ENCODE measurements at regions of chr18 and their contacts with region 1.

Region 1: GRCh38 chr18:57881818-57882413 is 78.8 kb upstream of the ATP8B1 start:
- DNase-seq: peak; percentile 76
- ATAC-seq: peak; percentile 94
- H3K4me3 ChIP-seq: no peak overlapping the region
- H3K4me3 Mint-ChIP-seq: no peak overlapping the region
- H3K27ac ChIP-seq: no peak overlapping the region
- H3K27ac Mint-ChIP-seq: no peak overlapping the region
- H3K4me1 ChIP-seq: peaks cover 0 to 3% of the 10 kb centered on the region in 2 donors
- H3K4me1 Mint-ChIP-seq: peaks cover 4% of the 10 kb centered on the region
- H3K27me3 ChIP-seq: no peaks in the 10 kb centered on the region
- H3K27me3 Mint-ChIP-seq: no peaks in the 10 kb centered on the region
- CTCF ChIP-seq: peak; percentile 97

Region 2: DNA sequence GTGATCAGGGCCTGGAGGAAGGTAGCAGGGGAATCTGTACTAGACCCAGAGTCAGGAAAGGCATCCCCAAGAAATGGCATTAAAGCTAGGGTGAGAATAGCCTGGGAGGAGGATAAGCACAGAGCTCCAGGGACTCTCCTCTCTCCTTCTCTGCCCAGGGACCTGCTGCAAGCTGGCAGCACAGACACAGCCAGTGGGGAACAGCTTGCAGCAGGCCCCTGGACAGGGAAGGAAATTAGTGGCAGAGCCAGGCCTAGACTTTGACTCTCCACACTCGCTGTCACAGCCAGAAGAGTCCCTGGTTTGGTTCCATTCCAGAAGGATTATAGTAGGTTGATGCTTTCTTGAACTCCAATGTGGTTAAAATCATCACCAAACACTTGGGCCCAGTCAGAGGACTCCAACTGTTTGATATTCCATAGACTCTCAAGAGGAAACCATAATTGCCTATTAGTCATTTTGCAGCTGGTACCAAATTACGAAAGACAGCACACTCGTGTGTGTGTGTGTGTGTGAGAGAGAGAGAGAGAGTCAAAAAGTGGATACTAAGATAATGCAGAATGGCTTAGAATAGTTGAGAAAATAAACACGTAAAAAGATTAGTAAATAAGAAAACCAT is 16.7 kb after region 1 on chr18:
- CTCF ChIA-PET with region 1: interaction called, 10 read pairs
- POLR2A ChIA-PET with region 1: no interaction called
- intact Hi-C with region 1: no loop called
- DNase-seq: no peak
- ATAC-seq: no peak
- H3K4me3 ChIP-seq: no peak overlapping the region
- H3K4me3 Mint-ChIP-seq: no peak overlapping the region
- H3K27ac ChIP-seq: no peak overlapping the region
- H3K27ac Mint-ChIP-seq: no peak overlapping the region
- H3K4me1 ChIP-seq: no peaks in the 10 kb centered on the region
- H3K4me1 Mint-ChIP-seq: no peaks in the 10 kb centered on the region
- H3K27me3 ChIP-seq: peaks cover 0 to 3% (median 0%) of the 10 kb centered on the region in 4 experiments
- H3K27me3 Mint-ChIP-seq: peaks cover 2% of the 10 kb centered on the region
- CTCF ChIP-seq: no peak

Region 3: GRCh38 chr18:57921708-57922107 is 39.8 kb after region 1 on chr18:
- CTCF ChIA-PET with region 1: no interaction called
- POLR2A ChIA-PET with region 1: no interaction called
- intact Hi-C with region 1: no loop called
- DNase-seq: no peak
- ATAC-seq: no peak
- H3K4me3 ChIP-seq: no peak overlapping the region
- H3K4me3 Mint-ChIP-seq: no peak overlapping the region
- H3K27ac ChIP-seq: no peak overlapping the region
- H3K27ac Mint-ChIP-seq: no peak overlapping the region
- H3K4me1 ChIP-seq: peaks cover 0 to under 1% of the 10 kb centered on the region in 2 donors
- H3K4me1 Mint-ChIP-seq: peaks cover under 1% of the 10 kb centered on the region
- H3K27me3 ChIP-seq: no peaks in the 10 kb centered on the region
- H3K27me3 Mint-ChIP-seq: no peaks in the 10 kb centered on the region
- CTCF ChIP-seq: no peak

Region 4: DNA sequence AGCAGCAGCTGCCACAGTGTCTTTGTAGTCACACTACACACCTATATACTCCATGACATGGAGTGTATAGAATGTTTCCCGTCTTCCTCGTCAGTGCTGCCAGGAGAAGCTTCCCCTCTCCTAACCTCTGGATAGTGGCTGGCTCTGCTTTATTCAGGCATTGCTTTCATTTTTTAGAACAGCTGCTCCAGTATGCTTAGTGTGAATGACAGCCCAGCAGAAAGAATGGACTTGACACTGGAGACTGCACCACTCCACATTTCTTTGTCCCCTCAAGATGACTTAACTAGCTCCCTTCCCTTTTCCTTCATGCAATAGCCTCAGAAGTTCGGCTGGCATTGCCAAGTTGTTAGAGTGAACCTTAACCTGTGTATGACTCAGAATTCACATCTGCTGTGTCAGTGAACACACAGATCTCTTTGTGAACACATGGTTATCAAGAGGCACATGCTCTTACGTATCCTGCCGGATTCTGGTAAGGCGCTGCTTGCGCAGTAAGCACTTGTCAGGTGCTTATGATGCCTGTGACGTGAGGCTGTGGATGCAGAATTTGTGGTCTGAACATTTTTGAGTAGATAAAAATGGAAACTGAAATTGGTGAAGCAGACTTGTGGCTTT is 236.0 kb after region 1 on chr18:
- CTCF ChIA-PET with region 1: interaction called, 111 read pairs
- POLR2A ChIA-PET with region 1: no interaction called
- intact Hi-C with region 1: loop called (anchors 1 kb)
- DNase-seq: no peak
- ATAC-seq: no peak
- H3K4me3 ChIP-seq: no peak overlapping the region
- H3K4me3 Mint-ChIP-seq: no peak overlapping the region
- H3K27ac ChIP-seq: no peak overlapping the region
- H3K27ac Mint-ChIP-seq: no peak overlapping the region
- H3K4me1 ChIP-seq: peaks cover 5 to 6% of the 10 kb centered on the region in 2 donors
- H3K4me1 Mint-ChIP-seq: peaks cover 7% of the 10 kb centered on the region
- H3K27me3 ChIP-seq: peaks cover 0 to 3% (median 0%) of the 10 kb centered on the region in 4 experiments
- H3K27me3 Mint-ChIP-seq: no peaks in the 10 kb centered on the region
- CTCF ChIP-seq: no peak

Region 5: GRCh38 chr18:58135701-58136331 is 253.9 kb after region 1 on chr18:
- CTCF ChIA-PET with region 1: interaction called, 33 read pairs
- POLR2A ChIA-PET with region 1: no interaction called
- intact Hi-C with region 1: loop called (anchors 1 kb)
- DNase-seq: peak; percentile 75
- ATAC-seq: peak; percentile 71
- H3K4me3 ChIP-seq: no peak overlapping the region
- H3K4me3 Mint-ChIP-seq: peak overlapping the region; percentile 48
- H3K27ac ChIP-seq: no peak overlapping the region
- H3K27ac Mint-ChIP-seq: no peak overlapping the region
- H3K4me1 ChIP-seq: peaks cover 10 to 13% of the 10 kb centered on the region in 2 donors
- H3K4me1 Mint-ChIP-seq: peaks cover 19% of the 10 kb centered on the region
- H3K27me3 ChIP-seq: peaks cover 0 to 4% (median 0%) of the 10 kb centered on the region in 4 experiments
- H3K27me3 Mint-ChIP-seq: peaks cover 4% of the 10 kb centered on the region
- CTCF ChIP-seq: peak; percentile 87

Region 6: GRCh38 chr18:58493516-58494253 is 611.8 kb after region 1 on chr18:
- CTCF ChIA-PET with region 1: interaction called, 6 read pairs
- POLR2A ChIA-PET with region 1: no interaction called
- intact Hi-C with region 1: loop called (anchors 10 kb)
- DNase-seq: peak; percentile 74
- ATAC-seq: peak; percentile 89
- H3K4me3 ChIP-seq: no peak overlapping the region
- H3K4me3 Mint-ChIP-seq: no peak overlapping the region
- H3K27ac ChIP-seq: no peak overlapping the region
- H3K27ac Mint-ChIP-seq: no peak overlapping the region
- H3K4me1 ChIP-seq: peaks cover 0 to 5% of the 10 kb centered on the region in 2 donors
- H3K4me1 Mint-ChIP-seq: peaks cover 7% of the 10 kb centered on the region
- H3K27me3 ChIP-seq: peaks cover 0 to 22% (median 10%) of the 10 kb centered on the region in 4 experiments
- H3K27me3 Mint-ChIP-seq: peaks cover 47% of the 10 kb centered on the region
- CTCF ChIP-seq: peak; percentile 88

Measured in B cell (primary cell).